BJ (cell line): ENCODE measurements at regions of chr19 and their contacts with region 1.

Region 1: GRCh38 chr19:49458567-49458903 is 5.5 kb downstream of the ALDH16A1 start:
- DNase-seq: no peak
- H3K4me3 ChIP-seq: no peak overlapping the region
- H3K27me3 ChIP-seq: no peaks in the 10 kb centered on the region
- CTCF ChIP-seq: no peak

Region 2: DNA sequence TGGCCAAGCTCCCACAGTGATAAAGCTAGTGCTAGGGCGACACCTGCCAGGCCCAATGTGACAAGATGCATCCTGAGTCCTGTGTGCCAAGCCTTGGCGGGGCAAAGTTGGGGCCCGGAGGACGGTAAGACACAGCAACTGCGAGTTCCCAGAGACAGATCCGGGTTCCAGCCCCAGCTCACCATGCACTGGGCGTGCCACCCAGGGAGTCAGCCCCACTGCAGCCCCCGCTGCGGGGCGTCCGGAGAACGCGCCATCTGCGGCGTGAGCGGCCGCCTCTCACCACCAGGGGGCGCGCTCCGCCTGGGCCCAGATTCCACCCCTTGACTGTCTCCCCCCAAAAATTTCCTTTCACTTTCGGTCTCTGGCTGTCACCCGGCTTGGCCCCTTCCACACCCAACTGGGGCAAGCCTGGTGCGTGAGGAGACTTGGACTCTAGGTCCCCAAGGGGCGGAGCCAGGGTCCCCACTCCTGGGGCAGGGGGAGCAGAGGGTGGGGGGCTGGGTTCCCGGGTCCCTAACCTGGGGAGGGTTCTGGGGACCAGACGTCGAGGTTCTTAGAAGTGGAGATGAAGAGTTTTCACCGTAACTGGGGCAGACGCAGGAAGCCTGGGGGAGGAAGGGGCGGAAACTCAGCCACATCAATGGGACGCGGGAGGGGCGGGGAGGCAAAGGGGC is 15.5 kb after region 1 on chr19 and contains the start of gene FLT3LG:
- CTCF ChIA-PET with region 1: interaction called, 20 read pairs
- POLR2A ChIA-PET with region 1: no interaction called
- DNase-seq: no peak
- H3K4me3 ChIP-seq: peak within 1 kb of the TSS; percentile 80
- H3K27me3 ChIP-seq: no peaks in the 10 kb centered on the region
- CTCF ChIP-seq: peak; percentile 98
- polyA plus RNA-seq, gene FLT3LG: 4.9 and 7.7 TPM in 2 replicates

Region 3: GRCh38 chr19:49502866-49503581 is 44.5 kb after region 1 on chr19:
- CTCF ChIA-PET with region 1: no interaction called
- POLR2A ChIA-PET with region 1: no interaction called
- DNase-seq: peak; percentile 49
- H3K4me3 ChIP-seq: no peak overlapping the region
- H3K27me3 ChIP-seq: no peaks in the 10 kb centered on the region
- CTCF ChIP-seq: peak; percentile 68